Panc1 (cell line): ENCODE measurements at regions of chr12 and their contacts with region 1.

Region 1: GRCh38 chr12:31736472-31736871 is 7.7 kb upstream of the AMN1 start:
- DNase-seq: no peak
- ATAC-seq: peak; percentile 20; the same call in 1 of the 2 replicates
- H3K4me3 ChIP-seq: no peak overlapping the region
- H3K27ac ChIP-seq: no peak overlapping the region
- H3K4me1 ChIP-seq: peaks cover 7% of the 10 kb centered on the region
- H3K27me3 ChIP-seq: no peaks in the 10 kb centered on the region
- CTCF ChIP-seq: no peak

Region 2: GRCh38 chr12:31482816-31483215 is 253.7 kb before region 1 on chr12:
- CTCF ChIA-PET with region 1: no interaction called
- POLR2A ChIA-PET with region 1: no interaction called
- in situ Hi-C with region 1: no loop called
- intact Hi-C with region 1: no loop called
- DNase-seq: no peak
- ATAC-seq: no peak
- H3K4me3 ChIP-seq: no peak overlapping the region
- H3K27ac ChIP-seq: no peak overlapping the region
- H3K4me1 ChIP-seq: peaks cover 10% of the 10 kb centered on the region; the same call in 1 of the 2 replicates
- H3K27me3 ChIP-seq: no peaks in the 10 kb centered on the region
- CTCF ChIP-seq: no peak

Region 3: GRCh38 chr12:31659087-31659933 is 77.2 kb before region 1 on chr12 and contains the start of gene ETFBKMT:
- CTCF ChIA-PET with region 1: no interaction called
- POLR2A ChIA-PET with region 1: no interaction called
- in situ Hi-C with region 1: no loop called
- intact Hi-C with region 1: no loop called
- DNase-seq: peak; percentile 94
- ATAC-seq: peak; percentile 99
- H3K4me3 ChIP-seq: peak within 1 kb of the TSS; percentile 80 to 83
- H3K27ac ChIP-seq: peak within 1 kb of the TSS; percentile 93
- H3K4me1 ChIP-seq: peaks cover 7% of the 10 kb centered on the region
- H3K27me3 ChIP-seq: no peaks in the 10 kb centered on the region
- CTCF ChIP-seq: peak; percentile 45
- total RNA-seq, gene ETFBKMT: 1.5 TPM

Region 4: DNA sequence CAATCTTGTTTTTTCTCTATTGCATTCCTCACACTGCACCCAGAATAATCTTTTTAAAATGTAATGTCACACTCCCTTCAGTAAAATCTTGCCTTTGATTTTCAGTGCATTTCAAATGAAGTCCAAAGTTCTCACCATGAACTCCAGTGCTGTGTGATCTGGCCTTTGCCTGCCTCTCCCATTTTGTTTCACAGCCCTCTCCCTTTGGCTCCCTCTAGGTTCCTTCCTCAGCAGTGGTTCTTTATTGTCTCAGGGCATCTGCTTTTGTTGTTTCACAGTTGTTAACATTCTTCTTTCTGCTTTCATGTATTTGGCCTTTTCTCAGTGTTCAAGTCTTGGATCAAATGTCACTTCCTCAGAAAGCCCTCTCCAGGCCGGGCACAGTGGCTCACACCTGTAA is 76.8 kb after region 1 on chr12:
- CTCF ChIA-PET with region 1: no interaction called
- POLR2A ChIA-PET with region 1: interaction called, 14 read pairs
- in situ Hi-C with region 1: no loop called
- intact Hi-C with region 1: no loop called
- DNase-seq: no peak
- ATAC-seq: no peak
- H3K4me3 ChIP-seq: no peak overlapping the region
- H3K27ac ChIP-seq: no peak overlapping the region
- H3K4me1 ChIP-seq: no peaks in the 10 kb centered on the region
- H3K27me3 ChIP-seq: no peaks in the 10 kb centered on the region
- CTCF ChIP-seq: no peak

Region 5: GRCh38 chr12:32025906-32026305 is 289.4 kb after region 1 on chr12:
- CTCF ChIA-PET with region 1: no interaction called
- POLR2A ChIA-PET with region 1: no interaction called
- in situ Hi-C with region 1: no loop called
- intact Hi-C with region 1: no loop called
- DNase-seq: no peak
- ATAC-seq: no peak
- H3K4me3 ChIP-seq: no peak overlapping the region
- H3K27ac ChIP-seq: no peak overlapping the region
- H3K4me1 ChIP-seq: no peaks in the 10 kb centered on the region
- H3K27me3 ChIP-seq: no peaks in the 10 kb centered on the region
- CTCF ChIP-seq: no peak

Region 6: GRCh38 chr12:32105986-32106516 is 369.6 kb after region 1 on chr12:
- CTCF ChIA-PET with region 1: interaction called, 10 read pairs
- POLR2A ChIA-PET with region 1: no interaction called
- in situ Hi-C with region 1: no loop called
- intact Hi-C with region 1: no loop called
- DNase-seq: no peak
- ATAC-seq: peak; percentile 45
- H3K4me3 ChIP-seq: peak overlapping the region; percentile 74 to 93
- H3K27ac ChIP-seq: peak overlapping the region; percentile 79
- H3K4me1 ChIP-seq: peaks cover 19% of the 10 kb centered on the region
- H3K27me3 ChIP-seq: no peaks in the 10 kb centered on the region
- CTCF ChIP-seq: no peak